ENCODE measurements at regions of chr17 and their contacts with region 1.

Region 1: GRCh38 chr17:76182016-76182764 is 41.1 kb upstream of the FOXJ1 start:
- DNase-seq: peak; percentile 96
- H3K4me3 Mint-ChIP-seq: peak overlapping the region; percentile 8
- H3K27ac Mint-ChIP-seq: peak overlapping the region; percentile 93
- H3K4me1 Mint-ChIP-seq: peaks cover 69% of the 10 kb centered on the region
- H3K27me3 Mint-ChIP-seq: no peaks in the 10 kb centered on the region

Region 2: GRCh38 chr17:76141212-76142038 is 40.8 kb before region 1 on chr17 and contains the start of gene FOXJ1:
- CTCF ChIA-PET with region 1: interaction called, 12 read pairs
- POLR2A ChIA-PET with region 1: interaction called, 3 read pairs
- DNase-seq: peak; percentile 92
- H3K4me3 Mint-ChIP-seq: peak within 1 kb of the TSS; percentile 71
- H3K27ac Mint-ChIP-seq: peak within 1 kb of the TSS; percentile 69
- H3K4me1 Mint-ChIP-seq: peaks cover 58% of the 10 kb centered on the region
- H3K27me3 Mint-ChIP-seq: peaks cover 15% of the 10 kb centered on the region
- total RNA-seq, gene FOXJ1: 0.20 to 0.48 TPM

Region 3: DNA sequence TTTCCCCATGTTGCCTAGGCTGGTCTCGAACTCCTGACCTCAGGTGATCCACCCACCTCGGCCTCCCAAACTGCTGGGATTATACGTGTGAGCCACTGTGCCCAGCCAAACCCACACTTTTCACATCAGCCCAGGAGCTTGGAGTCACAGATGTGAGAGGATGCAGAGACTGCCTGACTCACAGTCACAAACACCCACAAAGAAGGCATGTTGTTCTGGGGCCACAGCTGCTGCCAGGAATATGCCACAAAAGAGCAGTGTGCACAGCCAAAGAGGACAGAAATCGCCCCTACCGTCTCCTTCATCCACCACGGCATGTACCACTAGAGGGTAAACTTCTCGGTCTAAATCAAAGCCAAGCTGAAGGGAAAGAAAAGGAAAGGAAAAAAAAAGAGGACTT is 16.0 kb before region 1 on chr17:
- CTCF ChIA-PET with region 1: interaction called, 36 read pairs
- POLR2A ChIA-PET with region 1: no interaction called
- DNase-seq: no peak
- H3K4me3 Mint-ChIP-seq: no peak overlapping the region
- H3K27ac Mint-ChIP-seq: peak overlapping the region; percentile 57
- H3K4me1 Mint-ChIP-seq: peaks cover 10% of the 10 kb centered on the region
- H3K27me3 Mint-ChIP-seq: no peaks in the 10 kb centered on the region

Region 4: DNA sequence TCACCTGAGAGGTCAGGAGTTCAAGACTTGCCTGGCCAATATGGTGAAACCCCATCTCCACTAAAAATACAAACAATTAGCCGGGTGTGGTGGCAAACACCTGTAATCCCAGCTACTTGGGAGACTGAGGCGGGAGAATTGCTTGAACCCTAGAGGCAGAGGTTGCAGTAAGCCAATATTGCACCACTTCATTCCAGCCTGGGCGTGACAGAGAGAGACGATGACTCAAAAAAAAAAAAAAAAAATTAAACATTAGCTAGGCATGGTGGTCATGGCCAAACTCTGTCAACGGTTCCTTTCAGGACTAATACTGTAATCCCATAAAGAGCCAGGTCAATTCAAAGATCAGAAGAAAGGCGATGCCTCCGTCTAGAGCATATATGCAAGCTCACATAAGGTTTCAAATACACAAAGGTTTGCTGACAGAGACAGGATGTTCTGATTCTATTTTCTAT is 55.7 kb after region 1 on chr17:
- CTCF ChIA-PET with region 1: interaction called, 4 read pairs
- POLR2A ChIA-PET with region 1: interaction called, 11 read pairs
- DNase-seq: no peak
- H3K4me3 Mint-ChIP-seq: peak overlapping the region; percentile 85
- H3K27ac Mint-ChIP-seq: peak overlapping the region; percentile 76
- H3K4me1 Mint-ChIP-seq: peaks cover 71% of the 10 kb centered on the region
- H3K27me3 Mint-ChIP-seq: no peaks in the 10 kb centered on the region

Region 5: DNA sequence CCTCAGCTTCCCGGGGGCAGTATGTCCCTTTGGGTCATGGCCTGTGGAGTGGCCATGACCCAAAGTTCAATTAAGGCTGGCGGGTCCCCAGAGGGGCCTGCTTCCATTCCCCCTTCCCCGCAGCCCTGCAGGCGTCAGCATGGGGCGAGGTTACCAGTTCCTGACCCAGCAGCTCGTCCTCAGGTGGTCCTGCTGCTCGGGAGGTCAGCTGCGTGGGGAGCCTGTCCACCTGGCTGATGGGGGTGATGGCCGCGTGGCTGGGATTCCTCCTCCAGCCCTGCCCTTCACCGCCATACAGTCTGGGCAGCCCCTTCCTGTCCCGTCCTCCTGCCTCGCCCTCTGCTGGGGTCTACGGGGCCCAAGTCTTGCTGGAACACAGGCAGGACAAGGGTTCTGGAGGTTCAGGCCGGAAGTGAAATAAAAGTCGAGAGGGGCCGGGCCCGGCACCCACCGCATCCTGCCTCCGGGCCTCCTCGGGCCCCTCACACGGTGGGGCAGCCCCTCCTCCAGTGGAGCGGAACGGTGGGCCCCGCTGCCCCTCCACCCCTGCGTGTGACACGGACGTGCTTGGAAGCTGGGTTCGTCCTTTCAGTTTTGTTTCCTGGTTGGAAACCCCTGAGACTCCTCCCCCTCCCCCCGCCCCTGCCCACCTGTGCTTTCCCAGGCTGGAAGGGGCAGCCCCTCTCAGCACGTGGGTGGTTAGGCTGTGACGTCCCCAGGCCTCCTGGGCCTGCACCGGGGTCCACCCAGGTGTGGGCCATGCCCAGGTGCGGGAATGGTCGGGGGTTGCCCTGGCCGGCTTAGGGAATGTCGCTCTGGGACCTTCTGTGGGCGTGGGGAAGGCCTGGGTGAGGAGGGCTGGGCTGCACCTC is 89.7 kb after region 1 on chr17:
- CTCF ChIA-PET with region 1: interaction called, 12 read pairs
- POLR2A ChIA-PET with region 1: interaction called, 6 read pairs
- DNase-seq: peak; percentile 80
- H3K4me3 Mint-ChIP-seq: peak overlapping the region; percentile 66
- H3K27ac Mint-ChIP-seq: peak overlapping the region; percentile 92
- H3K4me1 Mint-ChIP-seq: peaks cover 72% of the 10 kb centered on the region
- H3K27me3 Mint-ChIP-seq: no peaks in the 10 kb centered on the region

Region 6: GRCh38 chr17:76370261-76370993 is 188.2 kb after region 1 on chr17:
- CTCF ChIA-PET with region 1: no interaction called
- POLR2A ChIA-PET with region 1: no interaction called
- DNase-seq: no peak
- H3K4me3 Mint-ChIP-seq: no peak overlapping the region
- H3K27ac Mint-ChIP-seq: no peak overlapping the region
- H3K4me1 Mint-ChIP-seq: no peaks in the 10 kb centered on the region
- H3K27me3 Mint-ChIP-seq: no peaks in the 10 kb centered on the region